MCF 10A (cell line): ENCODE measurements at regions of chr6 and their contacts with region 1.

Region 1: GRCh38 chr6:3732345-3733141 is 19.0 kb downstream of the PXDC1 start:
- DNase-seq: peak; percentile 80
- H3K4me3 Mint-ChIP-seq: no peak overlapping the region
- H3K27ac Mint-ChIP-seq: no peak overlapping the region
- H3K4me1 Mint-ChIP-seq: peaks cover 9% of the 10 kb centered on the region
- H3K27me3 Mint-ChIP-seq: no peaks in the 10 kb centered on the region
- CTCF ChIP-seq: peak; percentile 94

Region 2: GRCh38 chr6:3410385-3411360 is 321.9 kb before region 1 on chr6:
- CTCF ChIA-PET with region 1: interaction called, 6 read pairs
- POLR2A ChIA-PET with region 1: interaction called, 3 read pairs
- intact Hi-C with region 1: loop called (anchors 1 kb)
- DNase-seq: peak; percentile 71
- H3K4me3 Mint-ChIP-seq: no peak overlapping the region
- H3K27ac Mint-ChIP-seq: no peak overlapping the region
- H3K4me1 Mint-ChIP-seq: peaks cover 13% of the 10 kb centered on the region
- H3K27me3 Mint-ChIP-seq: no peaks in the 10 kb centered on the region
- CTCF ChIP-seq: peak; percentile 64

Region 3: GRCh38 chr6:3623451-3624249 is 108.9 kb before region 1 on chr6:
- CTCF ChIA-PET with region 1: no interaction called
- POLR2A ChIA-PET with region 1: no interaction called
- intact Hi-C with region 1: no loop called
- DNase-seq: no peak
- H3K4me3 Mint-ChIP-seq: no peak overlapping the region
- H3K27ac Mint-ChIP-seq: no peak overlapping the region
- H3K4me1 Mint-ChIP-seq: no peaks in the 10 kb centered on the region
- H3K27me3 Mint-ChIP-seq: no peaks in the 10 kb centered on the region
- CTCF ChIP-seq: no peak

Region 4: GRCh38 chr6:3887150-3887700 is 154.7 kb after region 1 on chr6:
- CTCF ChIA-PET with region 1: interaction called, 10 read pairs
- POLR2A ChIA-PET with region 1: no interaction called
- intact Hi-C with region 1: no loop called
- DNase-seq: no peak
- H3K4me3 Mint-ChIP-seq: no peak overlapping the region
- H3K27ac Mint-ChIP-seq: no peak overlapping the region
- H3K4me1 Mint-ChIP-seq: peaks cover 10% of the 10 kb centered on the region
- H3K27me3 Mint-ChIP-seq: no peaks in the 10 kb centered on the region
- CTCF ChIP-seq: peak; percentile 20